ENCODE measurements at regions of chr12 and their contacts with region 1.

Region 1: DNA sequence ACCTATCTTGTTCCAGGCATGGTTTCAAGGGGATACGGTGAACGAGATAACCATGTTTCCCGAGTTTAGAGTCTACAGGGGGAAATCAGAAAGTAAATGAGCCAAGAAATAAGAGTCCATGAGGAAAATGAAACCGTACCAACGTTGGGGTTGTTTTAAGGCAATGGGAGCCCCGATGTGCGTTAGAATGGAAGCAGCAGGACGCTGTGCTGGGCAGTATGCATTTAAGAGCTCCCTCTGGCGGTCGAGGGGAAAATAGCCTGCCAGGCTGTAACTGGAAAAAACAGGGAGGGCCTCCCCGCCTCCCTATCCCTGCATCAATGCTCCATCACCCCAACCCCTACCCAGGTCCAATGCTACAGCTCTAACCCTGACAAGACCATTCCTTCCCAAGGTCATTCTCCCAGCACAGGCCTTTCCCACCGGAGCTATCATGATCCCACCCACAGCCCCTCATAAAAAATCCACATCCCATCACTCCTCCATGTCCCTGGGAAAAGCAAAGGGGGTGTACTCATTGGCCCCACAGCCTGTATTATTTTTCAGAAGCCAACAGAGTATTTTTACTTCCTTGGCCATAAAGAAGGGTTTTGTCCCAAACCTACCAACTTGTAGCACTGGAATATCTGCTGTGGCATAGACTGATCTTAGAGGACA is 226.3 kb upstream of the NOS1 start:
- DNase-seq: peak; percentile 56
- H3K4me3 ChIP-seq: no peak overlapping the region
- H3K27ac ChIP-seq: no peak overlapping the region
- H3K4me1 ChIP-seq: no peaks in the 10 kb centered on the region
- H3K27me3 ChIP-seq: no peaks in the 10 kb centered on the region
- CTCF ChIP-seq: peak; percentile 83

Region 2: DNA sequence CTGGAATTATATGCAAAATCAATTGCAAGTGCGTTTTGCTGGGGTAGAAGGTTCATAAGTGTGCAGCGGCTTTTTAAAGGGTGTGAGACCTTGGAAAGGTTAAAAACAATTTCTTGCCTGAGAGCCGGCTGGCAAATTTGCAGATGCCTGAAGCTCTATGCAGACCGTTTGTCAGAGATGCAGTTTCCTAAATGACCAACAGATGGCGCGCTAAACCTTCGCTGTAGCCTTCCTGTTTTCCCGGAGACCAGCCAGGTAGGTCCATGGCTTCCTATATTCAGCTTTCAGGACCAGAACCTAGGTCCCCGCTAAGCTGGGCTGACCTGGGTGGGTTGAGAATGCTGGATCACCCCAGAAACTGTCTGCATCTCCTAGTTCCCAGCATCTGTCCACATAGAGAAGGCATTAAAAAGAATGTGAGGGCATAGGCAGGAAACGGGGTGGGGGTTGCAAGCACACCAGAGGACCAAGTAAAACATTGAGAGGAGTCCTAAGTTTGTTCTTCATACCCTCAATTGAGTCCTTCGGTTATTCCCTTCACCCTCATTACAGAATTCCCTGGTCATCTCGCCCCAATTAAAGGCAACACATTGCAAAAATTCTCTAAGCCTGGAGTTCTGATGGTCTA is 220.6 kb before region 1 on chr12:
- intact Hi-C with region 1: loop called (anchors 2 kb)
- DNase-seq: peak; percentile 74
- H3K4me3 ChIP-seq: no peak overlapping the region
- H3K27ac ChIP-seq: no peak overlapping the region
- H3K4me1 ChIP-seq: no peaks in the 10 kb centered on the region
- H3K27me3 ChIP-seq: peaks cover 2% of the 10 kb centered on the region
- CTCF ChIP-seq: peak; percentile 84